Vagina (tissue), 2 donors: ENCODE measurements at regions of chr14 and their contacts with region 1.

Region 1: DNA sequence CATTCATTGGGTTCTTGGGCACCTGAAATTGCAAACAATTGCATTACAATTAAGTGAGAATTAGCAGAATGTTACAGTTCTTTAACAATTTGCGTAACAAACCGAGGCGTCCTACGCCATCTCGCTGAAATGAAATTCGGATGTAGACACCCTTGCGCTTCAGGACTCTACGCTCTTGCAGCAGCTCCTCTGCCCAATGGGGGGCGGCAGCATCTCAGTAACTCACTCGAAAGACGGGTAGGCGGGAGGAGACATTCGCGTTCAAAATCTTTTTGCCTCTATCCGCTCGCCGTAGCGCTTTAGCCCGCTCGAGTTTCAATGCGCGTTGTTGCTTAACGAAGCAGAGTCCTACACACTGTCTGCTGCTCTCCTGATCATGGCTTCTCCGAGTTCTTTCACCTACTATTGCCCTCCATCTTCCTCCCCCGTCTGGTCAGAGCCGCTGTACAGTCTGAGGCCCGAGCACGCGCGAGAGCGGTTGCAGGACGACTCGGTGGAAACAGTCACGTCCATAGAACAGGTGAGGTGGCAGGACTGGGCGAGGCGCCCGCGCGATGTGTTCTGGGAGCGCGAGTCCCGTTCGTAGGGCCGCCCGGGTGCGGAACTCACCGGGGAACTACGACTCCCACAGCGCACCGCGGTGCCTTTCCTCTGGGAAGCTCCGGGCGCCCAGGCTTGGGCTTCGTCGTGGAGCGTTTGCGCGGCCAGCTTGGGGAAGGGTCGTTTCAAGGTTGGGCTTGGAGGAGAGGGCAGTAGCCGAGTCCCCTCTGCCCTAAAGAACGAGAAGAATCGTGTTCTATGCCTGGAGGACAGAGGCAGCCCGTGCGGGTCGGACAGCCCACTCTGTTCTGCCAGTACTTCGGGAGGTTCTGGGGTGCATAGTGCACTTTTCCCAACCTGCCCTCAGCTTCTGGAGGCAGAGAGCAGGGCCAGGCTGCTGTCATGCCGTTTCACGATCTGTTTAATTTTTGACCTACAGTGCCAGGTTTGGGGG is at the start of gene FNTB:
- DNase-seq: peak in 1 of 2 donors; percentile 98
- H3K4me3 ChIP-seq: peak within 1 kb of the TSS; percentile 65 to 77
- H3K27ac ChIP-seq: peak within 1 kb of the TSS; percentile 81
- H3K4me1 ChIP-seq: peaks cover 32% of the 10 kb centered on the region
- H3K27me3 ChIP-seq: no peaks in the 10 kb centered on the region
- CTCF ChIP-seq: peak; percentile 32 to 84 (median 65)
- POLR2A ChIP-seq: no peak
- total RNA-seq, gene FNTB: 13.3 TPM

Region 2: GRCh38 chr14:65131301-65131701 is 144.4 kb after region 1 on chr14:
- intact Hi-C with region 1: loop called (anchors 10 kb)
- DNase-seq: no peak
- H3K4me3 ChIP-seq: no peak overlapping the region
- H3K27ac ChIP-seq: no peak overlapping the region
- H3K4me1 ChIP-seq: no peaks in the 10 kb centered on the region
- H3K27me3 ChIP-seq: no peaks in the 10 kb centered on the region
- CTCF ChIP-seq: no peak
- POLR2A ChIP-seq: no peak

Region 3: DNA sequence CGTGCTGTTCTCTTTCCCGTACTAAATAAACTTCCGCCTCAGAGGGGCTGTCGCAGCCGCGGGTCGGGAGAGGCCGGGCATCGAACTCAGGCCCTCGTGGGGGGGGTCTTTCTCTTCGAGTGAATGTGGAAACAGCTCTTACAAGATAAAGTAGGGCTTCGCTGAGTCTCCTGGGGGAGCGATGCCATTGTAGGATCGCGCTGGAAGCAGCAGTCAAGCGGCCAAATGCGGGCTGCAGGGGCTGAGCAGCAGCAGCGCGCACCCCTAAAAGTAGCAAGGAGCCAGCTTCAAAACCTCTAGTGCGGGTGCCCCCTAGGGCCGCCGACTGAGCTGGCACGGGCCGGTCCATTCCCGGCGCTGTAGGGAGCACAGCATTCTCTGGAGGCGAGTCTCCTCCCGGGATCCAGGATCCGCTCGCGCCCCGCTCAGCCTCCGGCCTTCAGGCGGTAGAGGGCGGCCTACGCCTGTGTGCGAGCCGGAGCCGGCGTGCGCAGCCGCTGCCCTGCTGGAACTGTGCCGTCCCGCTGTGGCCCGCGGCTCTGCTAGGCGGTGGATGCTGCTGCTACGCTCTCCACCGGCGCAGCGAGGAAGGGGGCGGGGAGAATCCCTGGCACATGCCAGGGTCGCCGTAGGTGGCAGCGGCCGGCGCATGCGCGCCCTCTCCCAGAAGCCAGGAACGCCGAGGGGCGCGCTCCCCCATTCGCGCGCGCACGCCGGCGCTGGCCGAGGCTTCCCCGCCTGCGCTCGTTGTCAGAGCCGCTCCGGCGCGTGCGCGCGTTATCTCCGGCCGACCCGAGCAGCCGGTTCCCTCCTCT is 425.4 kb after region 1 on chr14 and contains the start of gene FUT8:
- intact Hi-C with region 1: loop called (anchors 5 kb)
- DNase-seq: peak in 1 of 2 donors; percentile 92
- H3K4me3 ChIP-seq: peak within 1 kb of the TSS; percentile 69 to 94
- H3K27ac ChIP-seq: peak within 1 kb of the TSS; percentile 93
- H3K4me1 ChIP-seq: peaks cover 20% of the 10 kb centered on the region
- H3K27me3 ChIP-seq: no peaks in the 10 kb centered on the region
- CTCF ChIP-seq: peak; percentile 20 to 47 (median 34)
- POLR2A ChIP-seq: peak in 1 of 2 donors; percentile 34
- total RNA-seq, gene FUT8: 35.1 TPM

Region 4: GRCh38 chr14:65824285-65824977 is 837.6 kb after region 1 on chr14:
- intact Hi-C with region 1: loop called (anchors 10 kb)
- DNase-seq: no peak
- H3K4me3 ChIP-seq: no peak overlapping the region
- H3K27ac ChIP-seq: no peak overlapping the region
- H3K4me1 ChIP-seq: no peaks in the 10 kb centered on the region
- H3K27me3 ChIP-seq: no peaks in the 10 kb centered on the region
- CTCF ChIP-seq: peak; percentile 45 to 93 (median 68)
- POLR2A ChIP-seq: no peak